Activated CD8-positive, alpha-beta T cell treated with anti-CD3 and anti-CD28 coated beads for 36 hours (primary cell): ENCODE measurements at regions of chr3 and their contacts with region 1.

Region 1: DNA sequence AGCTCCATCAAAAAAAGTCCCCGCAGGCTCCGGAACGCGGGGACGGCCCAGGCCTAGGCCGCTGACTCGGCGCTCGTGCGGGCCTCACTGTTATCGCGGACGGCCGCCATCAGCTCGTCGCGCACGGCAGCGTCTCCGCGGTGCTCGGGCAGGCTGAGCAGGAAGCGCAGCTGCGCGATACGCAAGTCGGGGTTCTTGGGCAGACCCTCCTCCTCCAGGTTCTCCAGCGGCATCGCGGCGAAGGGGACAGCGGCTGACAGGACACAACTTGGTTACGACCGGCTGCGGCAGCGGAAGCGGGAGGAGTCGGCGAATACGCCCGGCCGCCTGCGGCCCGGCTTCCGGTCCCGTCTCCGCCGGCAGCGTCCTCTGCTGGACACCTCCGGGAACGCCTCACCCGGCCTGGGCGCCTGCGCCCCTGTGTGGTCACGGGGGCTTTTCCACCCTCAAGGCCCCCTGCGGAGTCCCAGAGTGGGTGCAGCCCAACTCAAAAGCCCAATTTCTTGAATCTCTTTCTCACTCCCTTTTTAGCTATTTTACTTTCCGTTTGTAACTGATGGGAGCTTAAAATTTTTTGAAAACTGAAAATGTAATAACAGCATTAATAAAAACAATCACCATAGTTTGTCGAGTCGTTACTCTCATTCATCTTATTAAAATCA is at the start of gene PSMD6:
- DNase-seq: peak; percentile 92
- ATAC-seq: peak; percentile 96
- H3K4me3 Mint-ChIP-seq: peak within 1 kb of the TSS; percentile 78
- H3K27ac Mint-ChIP-seq: peak within 1 kb of the TSS; percentile 89
- H3K4me1 Mint-ChIP-seq: peaks cover 20% of the 10 kb centered on the region
- H3K27me3 Mint-ChIP-seq: peaks cover 11% of the 10 kb centered on the region
- CTCF ChIP-seq: peak; percentile 98
- total RNA-seq, gene PSMD6: 110 to 113 TPM

Region 2: DNA sequence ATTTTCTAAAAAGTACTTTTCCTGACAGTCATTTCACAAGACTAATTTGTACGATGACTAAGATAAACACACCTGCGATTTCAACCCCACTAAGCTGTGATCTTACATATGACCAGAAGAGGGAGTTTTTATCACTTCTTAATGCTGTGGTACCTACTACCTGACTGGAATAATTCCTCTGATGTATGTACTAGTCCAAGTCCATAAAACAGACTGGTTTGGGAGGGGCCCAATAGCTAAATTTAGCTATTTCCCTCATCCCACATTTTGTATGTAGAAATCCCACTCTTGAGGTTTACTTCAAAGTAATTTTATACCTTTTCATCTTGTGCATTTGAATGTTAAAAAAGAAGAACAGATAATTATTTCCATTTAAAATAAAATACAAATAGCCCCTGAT is 61.4 kb before region 1 on chr3:
- CTCF ChIA-PET with region 1: interaction called, 20 read pairs
- POLR2A ChIA-PET with region 1: interaction called, 3 read pairs
- intact Hi-C with region 1: no loop called
- DNase-seq: no peak
- ATAC-seq: peak; percentile 85
- H3K4me3 Mint-ChIP-seq: no peak overlapping the region
- H3K27ac Mint-ChIP-seq: no peak overlapping the region
- H3K4me1 Mint-ChIP-seq: peaks cover 49% of the 10 kb centered on the region
- H3K27me3 Mint-ChIP-seq: no peaks in the 10 kb centered on the region
- CTCF ChIP-seq: peak; percentile 79

Region 3: DNA sequence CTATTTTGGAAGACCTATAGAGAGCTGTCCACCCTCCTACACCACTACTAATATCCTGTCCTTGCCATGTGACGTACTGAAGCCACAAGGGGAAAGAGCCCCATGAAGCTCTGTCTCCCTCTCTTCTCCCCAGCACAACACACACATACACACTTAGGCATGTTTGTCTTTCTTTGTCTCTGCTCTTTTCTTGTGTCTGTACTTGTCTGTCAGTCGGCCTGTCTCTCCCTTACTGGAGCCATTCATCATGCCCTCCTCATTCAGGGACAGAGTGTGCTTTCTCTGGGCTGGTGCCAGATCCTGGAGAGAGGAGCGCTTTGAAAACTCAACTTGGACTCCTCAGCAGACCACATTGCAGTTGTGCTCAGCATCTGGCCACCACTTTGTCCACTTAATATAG is 47.6 kb before region 1 on chr3:
- CTCF ChIA-PET with region 1: interaction called, 17 read pairs
- POLR2A ChIA-PET with region 1: interaction called, 4 read pairs
- intact Hi-C with region 1: no loop called
- DNase-seq: no peak
- ATAC-seq: no peak
- H3K4me3 Mint-ChIP-seq: no peak overlapping the region
- H3K27ac Mint-ChIP-seq: peak overlapping the region; percentile 58
- H3K4me1 Mint-ChIP-seq: peaks cover 90% of the 10 kb centered on the region
- H3K27me3 Mint-ChIP-seq: no peaks in the 10 kb centered on the region
- CTCF ChIP-seq: no peak

Region 4: GRCh38 chr3:64003589-64003988 is 19.7 kb before region 1 on chr3:
- CTCF ChIA-PET with region 1: interaction called, 39 read pairs
- POLR2A ChIA-PET with region 1: interaction called, 12 read pairs
- intact Hi-C with region 1: no loop called
- DNase-seq: no peak
- ATAC-seq: no peak
- H3K4me3 Mint-ChIP-seq: no peak overlapping the region
- H3K27ac Mint-ChIP-seq: no peak overlapping the region
- H3K4me1 Mint-ChIP-seq: peaks cover 19% of the 10 kb centered on the region
- H3K27me3 Mint-ChIP-seq: no peaks in the 10 kb centered on the region
- CTCF ChIP-seq: no peak

Region 5: DNA sequence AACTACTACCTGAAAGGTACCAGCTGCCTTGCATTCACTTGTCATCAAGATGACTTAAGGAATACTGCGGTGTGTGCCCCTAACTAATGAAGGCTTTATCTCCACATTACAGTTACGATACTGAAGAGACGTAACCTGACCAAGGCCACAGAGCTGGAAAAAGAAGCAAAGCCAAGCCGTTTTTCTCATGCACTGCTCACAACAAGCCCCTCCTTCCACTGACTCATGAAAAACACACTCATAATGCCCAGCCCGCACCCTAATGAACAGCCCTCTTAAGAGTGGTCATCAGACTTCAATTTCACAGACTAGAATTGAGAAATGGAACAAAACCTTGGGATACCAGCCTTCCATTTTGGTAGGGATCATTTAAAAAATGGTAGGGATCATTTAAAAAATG is 11.6 kb before region 1 on chr3:
- CTCF ChIA-PET with region 1: interaction called, 39 read pairs
- POLR2A ChIA-PET with region 1: interaction called, 12 read pairs
- intact Hi-C with region 1: no loop called
- DNase-seq: peak; percentile 9
- ATAC-seq: peak; percentile 53
- H3K4me3 Mint-ChIP-seq: no peak overlapping the region
- H3K27ac Mint-ChIP-seq: peak overlapping the region; percentile 55
- H3K4me1 Mint-ChIP-seq: peaks cover 45% of the 10 kb centered on the region
- H3K27me3 Mint-ChIP-seq: no peaks in the 10 kb centered on the region
- CTCF ChIP-seq: no peak

Region 6: GRCh38 chr3:64484289-64484992 is 461.1 kb after region 1 on chr3:
- CTCF ChIA-PET with region 1: interaction called, 59 read pairs
- POLR2A ChIA-PET with region 1: no interaction called
- intact Hi-C with region 1: no loop called
- DNase-seq: peak; percentile 83
- ATAC-seq: peak; percentile 98
- H3K4me3 Mint-ChIP-seq: no peak overlapping the region
- H3K27ac Mint-ChIP-seq: no peak overlapping the region
- H3K4me1 Mint-ChIP-seq: no peaks in the 10 kb centered on the region
- H3K27me3 Mint-ChIP-seq: peaks cover 14% of the 10 kb centered on the region
- CTCF ChIP-seq: peak; percentile 72